ENCODE measurements at regions of chr1 and their contacts with region 1.

Region 1: DNA sequence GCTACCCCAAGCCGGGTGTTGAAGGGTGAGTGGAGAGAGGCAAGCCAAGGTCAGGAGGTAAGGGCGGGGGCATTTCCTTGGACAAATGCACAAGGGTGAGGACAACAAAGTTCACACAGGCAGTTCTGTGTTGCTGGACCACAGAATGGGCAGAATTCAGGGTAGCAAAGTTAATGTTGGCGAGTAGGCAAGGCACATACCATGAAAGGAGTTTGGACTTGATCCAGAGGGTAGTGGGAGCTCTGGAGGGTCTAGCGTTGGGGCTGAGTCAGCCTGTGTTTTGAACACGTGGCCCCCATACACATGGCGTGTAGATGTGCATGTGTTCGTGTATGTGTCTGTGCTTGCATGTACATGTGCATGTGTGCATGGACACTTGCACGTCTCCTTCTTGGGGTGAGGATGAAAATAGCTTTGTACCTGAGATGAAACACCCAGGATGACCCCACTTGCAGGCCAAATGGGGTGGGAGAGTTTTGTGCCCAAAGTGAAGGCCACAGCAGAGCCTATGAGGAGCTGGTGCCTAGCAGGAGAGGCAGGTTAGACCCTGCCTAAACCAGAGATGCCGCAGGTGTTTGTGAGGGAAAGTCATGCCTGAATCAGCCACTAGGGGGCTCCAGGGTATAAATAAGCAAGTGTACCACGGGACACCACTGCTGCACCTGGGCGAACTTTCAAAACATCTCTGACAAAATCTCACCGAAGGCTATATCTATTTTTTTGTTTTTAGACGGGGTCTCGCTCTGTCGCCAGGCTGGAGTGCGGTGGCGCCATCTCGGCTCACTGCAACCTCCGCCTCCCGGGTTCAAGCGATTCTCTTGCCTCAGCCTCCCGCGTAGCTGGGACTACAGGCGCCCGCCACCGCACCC is 21.8 kb downstream of the SLC27A3 start:
- DNase-seq: peak; percentile 76
- ATAC-seq: peak; percentile 81

Region 2: DNA sequence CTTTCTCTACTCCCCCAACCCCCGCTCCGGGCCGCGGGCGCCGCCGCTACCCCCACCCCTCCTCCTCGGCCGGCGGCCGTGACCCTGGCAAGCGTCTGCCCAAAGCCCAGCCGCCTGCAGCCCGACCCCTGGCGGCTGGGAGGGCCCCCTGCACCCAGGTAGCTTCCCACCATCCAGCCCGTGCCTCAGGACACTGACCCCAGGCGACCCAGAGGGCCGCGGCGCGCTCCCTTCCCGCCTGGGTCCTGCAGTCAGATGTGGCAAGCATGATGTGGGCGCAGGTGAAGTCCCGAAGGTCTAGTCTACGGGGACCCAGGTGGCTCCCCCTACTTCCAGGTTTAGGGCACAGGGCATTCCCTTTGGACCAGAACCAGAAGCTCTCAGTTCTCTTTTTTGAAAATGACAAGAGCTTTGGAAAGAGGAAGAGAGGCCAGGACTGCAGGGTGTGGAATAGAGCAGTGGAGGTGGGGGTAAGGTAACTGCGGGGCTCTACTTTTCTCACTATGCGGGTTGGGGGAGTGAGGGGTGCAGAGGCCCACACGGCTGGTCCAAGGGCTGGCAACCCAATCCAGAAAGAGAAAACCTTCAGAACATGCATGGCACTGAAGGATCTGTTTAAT is 149.7 kb after region 1 on chr1 and contains the start of gene DENND4B:
- intact Hi-C with region 1: loop called (anchors 5 kb)
- DNase-seq: peak; percentile 89
- ATAC-seq: peak; percentile 82
- total RNA-seq, gene DENND4B: 45.5 TPM

Region 3: DNA sequence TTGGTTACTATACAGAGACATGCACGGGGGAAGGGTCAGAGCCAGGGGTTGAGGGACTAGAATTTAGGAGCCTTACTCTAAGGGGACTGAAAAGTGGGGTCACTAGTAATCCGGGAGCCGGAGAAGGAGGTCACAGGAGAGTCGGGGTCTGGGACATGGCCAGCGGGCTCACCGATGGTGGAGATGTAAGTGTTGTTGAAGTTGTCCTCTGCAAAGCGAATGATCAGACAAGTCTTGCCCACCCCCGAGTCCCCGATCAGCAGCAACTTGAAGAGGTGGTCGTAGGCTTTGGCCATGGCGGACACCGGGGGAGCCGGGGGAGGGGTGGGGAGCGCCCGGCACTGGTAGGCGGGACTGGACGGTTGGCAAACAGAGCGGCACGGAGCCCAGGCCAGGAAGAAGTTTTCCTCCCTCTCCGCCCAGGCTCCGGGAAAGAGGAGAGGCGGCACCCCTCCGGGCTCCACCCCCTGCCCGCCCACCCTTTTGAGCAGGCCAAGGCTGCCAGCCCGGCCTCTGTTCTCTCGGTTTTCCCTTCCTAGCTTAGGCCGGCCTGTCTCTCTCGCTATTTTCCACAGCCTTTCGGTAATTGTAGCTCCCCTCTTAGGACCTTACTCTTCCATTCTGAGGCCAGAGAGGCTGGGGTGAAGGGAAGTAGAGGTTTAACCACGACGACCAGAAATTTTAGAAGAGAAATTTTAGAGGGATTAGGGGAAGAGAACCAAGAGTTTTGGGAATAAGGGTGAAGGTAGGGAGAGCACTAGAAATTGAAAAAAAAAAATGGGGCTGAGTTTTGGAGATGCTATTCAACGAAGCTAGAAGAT is 189.1 kb after region 1 on chr1 and contains the start of gene RAB13:
- intact Hi-C with region 1: loop called (anchors 5 kb)
- DNase-seq: peak; percentile 89
- ATAC-seq: peak; percentile 86
- total RNA-seq, gene RAB13: 59.9 TPM